ENCODE measurements at regions of chr14 and their contacts with region 1.

Region 1: GRCh38 chr14:75223664-75224154 is 47.3 kb upstream of the TMED10 start:
- DNase-seq: no peak
- H3K4me3 Mint-ChIP-seq: no peak overlapping the region
- H3K27ac Mint-ChIP-seq: no peak overlapping the region
- H3K4me1 Mint-ChIP-seq: peaks cover 34% of the 10 kb centered on the region
- H3K27me3 Mint-ChIP-seq: no peaks in the 10 kb centered on the region
- CTCF ChIP-seq: no peak

Region 2: GRCh38 chr14:75009176-75009575 is 214.5 kb before region 1 on chr14:
- CTCF ChIA-PET with region 1: no interaction called
- POLR2A ChIA-PET with region 1: no interaction called
- intact Hi-C with region 1: no loop called
- DNase-seq: no peak
- H3K4me3 Mint-ChIP-seq: no peak overlapping the region
- H3K27ac Mint-ChIP-seq: no peak overlapping the region
- H3K4me1 Mint-ChIP-seq: peaks cover under 1% of the 10 kb centered on the region
- H3K27me3 Mint-ChIP-seq: no peaks in the 10 kb centered on the region
- CTCF ChIP-seq: no peak

Region 3: DNA sequence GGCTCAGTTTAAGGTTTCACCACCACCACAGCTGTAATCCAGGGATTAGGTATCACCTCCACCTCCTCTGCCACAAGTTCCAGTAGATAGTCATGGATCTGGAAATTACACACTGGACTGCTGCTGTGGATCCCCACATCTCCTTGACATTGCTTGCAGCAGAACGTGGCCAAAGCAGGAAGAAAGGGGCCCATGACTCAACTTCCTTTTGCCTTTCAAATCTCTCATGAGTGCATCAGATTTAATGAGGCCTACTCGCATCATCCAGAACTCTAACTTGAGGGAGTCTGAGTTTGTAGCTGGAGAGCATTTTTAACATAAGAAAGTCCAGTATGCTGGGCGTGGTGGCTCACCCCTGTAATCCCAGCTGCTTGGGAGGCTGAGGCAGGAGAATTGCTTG is 18.1 kb before region 1 on chr14:
- CTCF ChIA-PET with region 1: interaction called, 5 read pairs
- POLR2A ChIA-PET with region 1: interaction called, 13 read pairs
- intact Hi-C with region 1: no loop called
- DNase-seq: peak; percentile 12
- H3K4me3 Mint-ChIP-seq: no peak overlapping the region
- H3K27ac Mint-ChIP-seq: no peak overlapping the region
- H3K4me1 Mint-ChIP-seq: peaks cover 20% of the 10 kb centered on the region
- H3K27me3 Mint-ChIP-seq: no peaks in the 10 kb centered on the region
- CTCF ChIP-seq: no peak

Region 4: DNA sequence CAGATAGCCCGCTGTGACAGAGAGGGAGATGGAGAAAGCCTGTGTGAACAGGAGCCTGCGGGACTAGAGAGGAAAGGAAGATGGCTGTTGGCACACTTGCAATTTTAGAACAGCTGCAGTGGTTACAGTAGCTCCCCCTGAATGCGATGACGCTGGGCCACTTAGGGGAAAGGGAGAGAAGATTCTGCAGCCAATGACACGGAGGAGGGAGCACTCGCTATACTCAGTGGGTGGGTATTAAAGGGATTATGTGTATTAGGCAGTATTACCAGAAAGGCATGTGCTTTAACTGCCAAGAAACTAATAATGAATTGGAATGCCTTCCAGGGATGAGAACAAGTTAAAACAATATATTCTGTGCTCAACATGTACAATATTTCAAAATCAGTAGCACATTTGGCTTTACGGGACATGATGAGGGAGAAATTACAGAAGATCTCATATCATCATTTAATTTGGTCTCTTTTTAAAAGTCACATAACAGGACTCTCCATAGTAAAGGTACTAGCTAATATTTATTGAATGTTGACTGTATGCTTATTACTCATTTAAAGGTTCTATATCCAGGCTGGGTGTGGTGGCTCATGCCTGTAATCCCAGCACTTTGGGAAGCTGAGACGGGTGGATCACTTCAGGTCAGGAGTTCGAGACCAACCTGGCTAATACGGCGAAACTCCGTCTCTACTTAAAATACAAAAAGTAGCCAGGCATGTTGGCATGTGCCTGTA is 19.0 kb after region 1 on chr14:
- CTCF ChIA-PET with region 1: interaction called, 7 read pairs
- POLR2A ChIA-PET with region 1: interaction called, 49 read pairs
- intact Hi-C with region 1: no loop called
- DNase-seq: peak; percentile 95
- H3K4me3 Mint-ChIP-seq: peak overlapping the region; percentile 2
- H3K27ac Mint-ChIP-seq: peak overlapping the region; percentile 57
- H3K4me1 Mint-ChIP-seq: peaks cover 10% of the 10 kb centered on the region
- H3K27me3 Mint-ChIP-seq: no peaks in the 10 kb centered on the region
- CTCF ChIP-seq: no peak